HEK293T (cell line): ENCODE measurements at regions of chr7 and their contacts with region 1.

Region 1: GRCh38 chr7:150962553-150963399 is 15.3 kb downstream of the KCNH2 start:
- DNase-seq: peak; percentile 92

Region 2: GRCh38 chr7:150974468-150975391 is 12.0 kb after region 1 on chr7:
- CTCF ChIA-PET with region 1: interaction called, 21 read pairs
- POLR2A ChIA-PET with region 1: no interaction called
- DNase-seq: peak; percentile 75

Region 3: DNA sequence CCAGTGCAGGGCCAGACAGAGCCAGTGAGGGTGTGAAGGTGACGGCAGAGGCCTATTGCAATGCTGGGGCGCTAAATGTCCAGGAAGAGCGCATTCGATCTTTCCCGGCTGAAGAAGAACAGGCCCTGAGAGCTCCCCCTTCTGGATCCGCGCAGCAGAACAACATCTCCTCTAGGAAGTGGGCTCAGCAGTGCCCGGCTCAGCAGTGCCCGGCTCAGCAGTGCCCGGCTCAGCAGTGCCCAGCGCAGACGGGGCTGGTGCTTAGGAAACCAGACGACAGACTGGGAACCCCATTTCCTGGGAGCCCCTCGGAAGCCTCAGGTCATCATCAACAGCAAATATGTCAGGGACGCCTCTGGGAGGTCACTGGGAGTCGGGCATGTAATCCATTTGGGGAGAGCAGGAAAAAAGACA is 23.3 kb after region 1 on chr7:
- CTCF ChIA-PET with region 1: interaction called, 51 read pairs
- POLR2A ChIA-PET with region 1: no interaction called
- DNase-seq: peak; percentile 76